ENCODE measurements at regions of chr4 and their contacts with region 1.

Region 1: GRCh38 chr4:26860157-26860921 is at the start of gene STIM2:
- DNase-seq: peak; percentile 95 to 98
- ATAC-seq: peak; percentile 91 to 97 (median 94)
- H3K4me3 ChIP-seq: peak within 1 kb of the TSS; percentile 72 to 93 (median 82)
- H3K27ac ChIP-seq: peak within 1 kb of the TSS; percentile 86 to 99 (median 94)
- H3K4me1 ChIP-seq: peaks cover 7 to 68% (median 55%) of the 10 kb centered on the region in 9 donors
- H3K27me3 ChIP-seq: no peaks in the 10 kb centered on the region
- CTCF ChIP-seq: peak in 7 of 9 donors; percentile 2 to 51 (median 40)
- total RNA-seq, gene STIM2: 6.5 to 13.5 (median 9.6) TPM

Region 2: GRCh38 chr4:26288355-26288909 is 571.9 kb before region 1 on chr4:
- intact Hi-C with region 1: no loop called
- DNase-seq: no peak
- ATAC-seq: peak in 7 of 8 donors; percentile 42 to 66 (median 53)
- H3K4me3 ChIP-seq: no peak overlapping the region
- H3K27ac ChIP-seq: peak overlapping the region in 4 of 10 donors; percentile 6 to 83 (median 28)
- H3K4me1 ChIP-seq: peaks cover 0 to 20% (median 0%) of the 10 kb centered on the region in 9 donors
- H3K27me3 ChIP-seq: peaks cover 0 to 5% (median 0%) of the 10 kb centered on the region in 7 donors
- CTCF ChIP-seq: no peak

Region 3: DNA sequence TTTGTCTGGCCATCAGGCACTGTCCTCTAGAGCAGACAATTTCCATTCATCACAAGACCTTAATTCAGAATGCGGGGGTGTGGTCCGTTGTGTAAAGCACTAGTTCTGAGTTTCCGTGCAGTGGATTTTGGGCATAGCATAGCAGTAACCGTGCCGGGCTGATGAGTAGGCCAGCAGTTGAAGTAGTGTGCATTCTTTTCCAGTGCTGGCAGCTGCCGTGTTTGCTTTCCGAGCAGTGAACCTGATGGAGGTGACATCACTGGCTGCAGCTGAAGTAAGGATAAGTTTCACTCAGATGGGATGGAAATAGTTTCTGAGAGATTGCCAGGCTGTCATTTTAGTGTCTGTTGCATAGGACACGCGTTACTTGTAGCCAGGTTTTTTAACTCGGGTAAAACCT is 106.7 kb before region 1 on chr4:
- intact Hi-C with region 1: loop called in 1 of 10 experiments (anchors 10 kb)
- DNase-seq: peak; percentile 34 to 69
- ATAC-seq: peak; percentile 82 to 99 (median 95)
- H3K4me3 ChIP-seq: no peak overlapping the region
- H3K27ac ChIP-seq: peak overlapping the region in 5 of 10 donors; percentile 11 to 54 (median 28)
- H3K4me1 ChIP-seq: peaks cover 0 to 21% (median 15%) of the 10 kb centered on the region in 9 donors
- H3K27me3 ChIP-seq: no peaks in the 10 kb centered on the region
- CTCF ChIP-seq: no peak

Region 4: DNA sequence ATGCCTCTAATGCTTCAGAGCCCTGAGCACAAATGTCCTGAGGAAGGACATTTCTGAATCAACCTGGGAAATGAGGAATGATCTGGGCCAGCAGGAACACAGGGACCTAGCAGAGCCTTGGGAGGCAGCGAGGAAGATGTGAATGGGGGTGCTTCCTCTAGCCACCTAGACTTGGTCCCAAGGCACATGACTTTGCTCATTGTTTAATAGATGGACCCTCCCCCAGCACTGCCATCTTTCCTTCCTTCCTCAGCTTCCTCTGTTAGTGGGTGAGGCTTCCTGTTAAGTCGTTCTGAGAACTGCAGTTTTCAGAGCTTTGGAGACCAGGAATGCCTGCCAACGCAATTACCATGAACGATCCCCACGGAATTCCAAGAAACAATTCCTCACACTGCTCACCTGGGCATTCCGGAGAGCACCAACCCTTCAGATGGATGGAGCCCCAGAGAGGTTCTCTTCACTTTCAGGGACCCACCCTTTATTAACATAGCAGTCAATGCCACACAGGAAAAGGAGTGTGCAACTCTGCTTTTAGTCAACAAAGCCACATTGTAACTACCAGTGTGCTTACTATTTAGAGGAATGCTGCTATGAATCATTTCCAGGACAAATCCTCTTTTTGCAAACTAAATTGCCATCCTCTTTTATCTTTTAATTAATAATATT is 48.2 kb before region 1 on chr4:
- intact Hi-C with region 1: loop called in 1 of 10 experiments (anchors 2 kb)
- DNase-seq: peak in 1 of 2 donors; percentile 40
- ATAC-seq: peak; percentile 55 to 88 (median 78)
- H3K4me3 ChIP-seq: no peak overlapping the region
- H3K27ac ChIP-seq: peak overlapping the region; percentile 23 to 85 (median 64)
- H3K4me1 ChIP-seq: peaks cover 4 to 60% (median 36%) of the 10 kb centered on the region in 9 donors
- H3K27me3 ChIP-seq: no peaks in the 10 kb centered on the region
- CTCF ChIP-seq: no peak

Region 5: GRCh38 chr4:26992657-26993361 is 132.5 kb after region 1 on chr4:
- intact Hi-C with region 1: loop called in 5 of 10 experiments (anchors 5 to 10 kb)
- DNase-seq: peak in 1 of 2 donors; percentile 75
- ATAC-seq: peak; percentile 75 to 91 (median 87)
- H3K4me3 ChIP-seq: no peak overlapping the region
- H3K27ac ChIP-seq: peak overlapping the region in 6 of 10 donors; percentile 5 to 64 (median 35)
- H3K4me1 ChIP-seq: peaks cover 5 to 39% (median 30%) of the 10 kb centered on the region in 9 donors
- H3K27me3 ChIP-seq: no peaks in the 10 kb centered on the region
- CTCF ChIP-seq: no peak

Region 6: DNA sequence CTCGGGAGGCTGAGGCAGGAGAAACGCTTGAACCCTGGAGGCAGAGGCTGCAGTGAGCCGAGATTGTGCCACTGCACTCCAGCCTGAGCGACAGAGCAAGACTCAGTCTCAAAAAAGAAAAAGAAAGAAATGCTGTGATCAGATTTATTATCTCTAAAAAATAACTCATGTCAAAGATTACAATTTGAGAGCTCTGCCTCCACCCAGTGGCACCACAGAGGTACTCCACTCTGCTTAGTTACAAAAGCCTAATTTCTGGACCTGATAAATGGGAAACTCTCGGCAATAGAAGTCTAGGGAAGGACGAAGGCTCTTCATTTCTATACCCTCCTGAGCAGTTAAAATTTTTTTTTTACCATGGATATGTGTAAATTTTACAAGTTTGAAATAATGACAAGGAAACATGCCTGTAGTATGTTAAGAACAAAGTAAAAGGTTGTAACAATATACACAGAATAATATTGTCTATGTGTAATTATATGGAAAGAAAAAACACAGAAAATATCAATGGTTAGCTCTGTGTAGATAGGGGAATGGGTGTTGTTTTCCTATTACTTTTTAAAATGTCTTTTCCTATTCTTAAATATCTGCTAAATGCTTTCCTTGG is 150.1 kb after region 1 on chr4:
- intact Hi-C with region 1: loop called in 5 of 10 experiments (anchors 2 to 10 kb)
- DNase-seq: peak; percentile 50 to 52
- ATAC-seq: peak in 7 of 8 donors; percentile 64 to 89 (median 74)
- H3K4me3 ChIP-seq: no peak overlapping the region
- H3K27ac ChIP-seq: peak overlapping the region in 1 of 10 donors; percentile 20
- H3K4me1 ChIP-seq: peaks cover 0 to 26% (median 8%) of the 10 kb centered on the region in 9 donors
- H3K27me3 ChIP-seq: no peaks in the 10 kb centered on the region
- CTCF ChIP-seq: peak; percentile 86 to 95 (median 89)

Measured in heart right ventricle (tissue), 16 donors.